H1 (cell line): ENCODE measurements at regions of chr18 and their contacts with region 1.

Region 1: GRCh38 chr18:36828630-36829361 is at the starts of genes KIAA1328 and TPGS2:
- DNase-seq: peak; percentile 61 to 90
- H3K4me3 ChIP-seq: peak within 1 kb of the TSS; percentile 92 to 98 (median 95)
- H3K27ac ChIP-seq: peak within 1 kb of the TSS; percentile 68
- H3K4me1 ChIP-seq: peaks cover 0 to 5% (median 2%) of the 10 kb centered on the region in 4 experiments; a peak in 1 of 7 replicates
- H3K27me3 ChIP-seq: no peaks in the 10 kb centered on the region
- CTCF ChIP-seq: peak; percentile 46 to 56 (median 55)
- EP300 ChIP-seq: no peak
- POLR2A ChIP-seq: peak; percentile 30 to 59; a peak in 1 of 3 replicates
- RAD21 ChIP-seq: peak; percentile 18 to 40; a peak in 3 of 4 replicates
- total RNA-seq, gene KIAA1328: 4.4 and 5.7 TPM in 2 replicates
- total RNA-seq, gene TPGS2: 135 and 151 TPM in 2 replicates

Region 2: DNA sequence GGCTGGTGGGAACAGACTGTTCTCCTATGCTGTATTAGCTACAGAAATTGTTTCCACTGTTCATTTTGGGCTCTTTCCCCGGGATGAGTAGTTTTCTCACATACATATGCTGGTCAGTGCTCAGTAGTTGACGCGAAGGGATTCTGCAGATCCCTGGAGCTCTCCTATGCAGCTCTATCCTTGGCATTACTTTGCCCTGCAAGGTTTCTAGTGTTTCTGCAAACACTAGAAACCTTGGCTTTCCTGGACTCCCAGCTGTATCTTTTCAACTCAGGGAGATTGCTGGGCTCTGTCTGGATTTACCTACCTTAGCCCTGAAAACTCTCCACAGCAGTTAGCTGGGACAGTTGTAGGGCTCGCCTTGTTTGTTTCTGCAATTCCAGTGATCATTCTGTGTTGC is 11.0 kb after region 1 on chr18:
- CTCF ChIA-PET with region 1: interaction called, 14 read pairs
- POLR2A ChIA-PET with region 1: interaction called, 5 read pairs
- DNase-seq: no peak
- H3K4me3 ChIP-seq: no peak overlapping the region
- H3K27ac ChIP-seq: no peak overlapping the region
- H3K4me1 ChIP-seq: peaks cover 0 to 6% (median 4%) of the 10 kb centered on the region in 4 experiments; a peak in 2 of 7 replicates
- H3K27me3 ChIP-seq: no peaks in the 10 kb centered on the region
- CTCF ChIP-seq: no peak
- EP300 ChIP-seq: no peak
- POLR2A ChIP-seq: no peak
- RAD21 ChIP-seq: no peak

Region 3: GRCh38 chr18:36850530-36851201 is 21.9 kb after region 1 on chr18:
- CTCF ChIA-PET with region 1: interaction called, 12 read pairs
- POLR2A ChIA-PET with region 1: no interaction called
- DNase-seq: no peak
- H3K4me3 ChIP-seq: no peak overlapping the region
- H3K27ac ChIP-seq: no peak overlapping the region
- H3K4me1 ChIP-seq: no peaks in the 10 kb centered on the region
- H3K27me3 ChIP-seq: no peaks in the 10 kb centered on the region
- CTCF ChIP-seq: no peak
- EP300 ChIP-seq: no peak
- POLR2A ChIP-seq: no peak
- RAD21 ChIP-seq: no peak